ENCODE measurements at regions of chr11 and their contacts with region 1.

Region 1: DNA sequence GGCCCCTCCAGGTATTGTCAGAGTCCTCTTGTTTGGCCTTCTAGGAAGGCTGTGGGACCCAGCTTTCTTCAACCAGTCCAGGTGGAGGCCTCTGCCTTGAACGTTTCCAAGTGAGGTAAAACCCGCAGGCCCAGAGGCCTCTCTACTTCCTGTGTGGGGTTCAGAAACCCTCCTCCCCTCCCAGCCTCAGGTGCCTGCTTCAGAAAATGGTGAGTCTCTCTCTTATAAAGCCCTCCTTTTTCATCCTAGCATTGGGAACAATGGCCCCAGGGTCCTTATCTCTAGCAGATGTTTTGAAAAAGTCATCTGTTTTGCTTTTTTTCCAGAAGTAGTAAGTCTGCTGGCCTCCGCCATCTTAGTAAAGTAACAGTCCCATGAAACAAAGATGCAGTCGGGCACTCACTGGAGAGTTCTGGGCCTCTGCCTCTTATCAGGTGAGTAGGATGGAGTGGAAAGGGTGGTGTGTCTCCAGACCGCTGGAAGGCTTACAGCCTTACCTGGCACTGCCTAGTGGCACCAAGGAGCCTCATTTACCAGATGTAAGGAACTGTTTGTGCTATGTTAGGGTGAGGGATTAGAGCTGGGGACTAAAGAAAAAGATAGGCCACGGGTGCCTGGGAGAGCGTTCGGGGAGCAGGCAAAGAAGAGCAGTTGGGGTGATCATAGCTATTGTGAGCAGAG is at the start of gene CD3E:
- DNase-seq: peak; percentile 85
- ATAC-seq: peak; percentile 73
- H3K4me3 Mint-ChIP-seq: peak within 1 kb of the TSS; percentile 99
- H3K27ac Mint-ChIP-seq: peak within 1 kb of the TSS; percentile 99
- H3K4me1 Mint-ChIP-seq: peaks cover 73% of the 10 kb centered on the region
- H3K27me3 Mint-ChIP-seq: no peaks in the 10 kb centered on the region
- total RNA-seq, gene CD3E: 400 to 530 TPM

Region 2: GRCh38 chr11:117817368-117818040 is 487.2 kb before region 1 on chr11:
- CTCF ChIA-PET with region 1: interaction called, 3 read pairs
- POLR2A ChIA-PET with region 1: no interaction called
- intact Hi-C with region 1: loop called in 1 of 2 experiments (anchors 10 kb)
- DNase-seq: peak; percentile 95
- ATAC-seq: peak; percentile 45
- H3K4me3 Mint-ChIP-seq: peak overlapping the region; percentile 49
- H3K27ac Mint-ChIP-seq: peak overlapping the region; percentile 99
- H3K4me1 Mint-ChIP-seq: peaks cover 59% of the 10 kb centered on the region
- H3K27me3 Mint-ChIP-seq: no peaks in the 10 kb centered on the region

Region 3: DNA sequence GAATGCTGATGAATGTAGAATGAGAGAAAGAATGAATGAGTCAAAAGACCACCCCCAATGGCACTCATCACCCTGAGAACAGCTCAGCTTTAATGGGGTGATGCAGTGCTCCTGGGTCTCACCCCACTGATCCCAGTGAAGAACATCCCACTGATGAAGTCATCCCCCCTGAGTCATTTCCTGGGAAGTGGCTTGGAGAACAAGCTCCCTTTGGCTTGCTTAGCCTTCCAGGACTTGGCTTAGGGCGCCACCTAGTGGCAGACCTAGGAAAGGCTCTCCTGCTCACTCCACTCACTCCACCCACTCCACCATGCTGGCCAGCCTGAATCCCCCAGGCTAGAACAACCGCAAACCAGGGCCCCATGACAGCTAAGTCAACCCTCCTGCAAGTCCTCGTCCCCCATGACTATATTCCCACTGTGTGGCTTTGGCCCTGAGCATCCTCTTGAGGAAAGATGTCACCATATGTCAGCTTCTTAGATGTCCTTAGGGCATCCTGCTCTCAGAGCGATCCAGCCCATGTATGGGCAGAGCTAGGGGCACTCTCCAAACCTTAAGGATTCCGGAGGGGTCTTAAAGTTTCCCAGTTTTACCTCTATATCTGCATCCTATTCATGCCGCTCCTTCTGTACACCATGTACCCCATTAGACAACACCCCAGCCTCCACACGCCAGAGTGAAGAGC is 357.7 kb before region 1 on chr11:
- CTCF ChIA-PET with region 1: no interaction called
- POLR2A ChIA-PET with region 1: no interaction called
- intact Hi-C with region 1: no loop called
- DNase-seq: peak; percentile 92
- ATAC-seq: peak; percentile 59
- H3K4me3 Mint-ChIP-seq: no peak overlapping the region
- H3K27ac Mint-ChIP-seq: peak overlapping the region; percentile 68
- H3K4me1 Mint-ChIP-seq: peaks cover 79% of the 10 kb centered on the region
- H3K27me3 Mint-ChIP-seq: no peaks in the 10 kb centered on the region

Region 4: DNA sequence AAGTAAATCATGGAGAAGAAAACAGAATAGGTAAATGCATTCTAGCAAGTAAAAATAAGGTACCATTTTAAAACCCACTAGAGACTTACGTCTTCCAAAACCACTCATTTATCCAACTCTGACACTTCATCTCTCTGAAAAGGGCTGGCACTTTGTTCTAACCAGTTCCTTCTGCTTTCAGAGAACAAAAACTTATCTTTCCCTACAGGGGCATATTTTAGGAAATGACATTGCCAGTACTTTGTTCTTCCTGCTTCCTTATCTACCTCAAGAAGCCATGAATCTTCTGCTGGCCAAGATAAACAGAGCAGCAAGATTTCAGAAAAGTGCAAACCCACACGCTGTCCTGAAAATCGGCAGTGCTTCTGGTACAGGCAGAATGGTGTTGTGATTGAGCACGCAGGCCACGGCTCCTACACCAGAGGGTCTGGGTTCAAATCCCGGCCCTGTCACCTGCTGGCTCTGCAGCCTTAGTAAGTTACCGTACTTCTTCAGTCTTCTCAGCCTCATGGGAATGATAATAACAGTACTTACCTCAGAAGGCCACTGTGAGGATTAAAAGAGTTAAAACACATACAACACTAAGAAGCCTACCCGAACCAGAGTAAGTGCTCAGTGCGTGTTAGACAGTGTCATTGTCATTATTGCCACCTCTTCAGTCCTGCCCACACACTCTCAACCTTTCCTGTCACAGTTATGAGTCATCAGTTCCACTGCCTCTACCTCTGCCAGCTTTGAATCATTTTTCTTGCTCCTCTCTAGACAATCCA is 63.5 kb before region 1 on chr11:
- CTCF ChIA-PET with region 1: interaction called, 4 read pairs
- POLR2A ChIA-PET with region 1: interaction called, 4 read pairs
- intact Hi-C with region 1: loop called (anchors 2 to 5 kb)
- DNase-seq: peak; percentile 82
- ATAC-seq: peak; percentile 87
- H3K4me3 Mint-ChIP-seq: peak overlapping the region; percentile 77
- H3K27ac Mint-ChIP-seq: peak overlapping the region; percentile 94
- H3K4me1 Mint-ChIP-seq: peaks cover 88% of the 10 kb centered on the region
- H3K27me3 Mint-ChIP-seq: no peaks in the 10 kb centered on the region

Region 5: DNA sequence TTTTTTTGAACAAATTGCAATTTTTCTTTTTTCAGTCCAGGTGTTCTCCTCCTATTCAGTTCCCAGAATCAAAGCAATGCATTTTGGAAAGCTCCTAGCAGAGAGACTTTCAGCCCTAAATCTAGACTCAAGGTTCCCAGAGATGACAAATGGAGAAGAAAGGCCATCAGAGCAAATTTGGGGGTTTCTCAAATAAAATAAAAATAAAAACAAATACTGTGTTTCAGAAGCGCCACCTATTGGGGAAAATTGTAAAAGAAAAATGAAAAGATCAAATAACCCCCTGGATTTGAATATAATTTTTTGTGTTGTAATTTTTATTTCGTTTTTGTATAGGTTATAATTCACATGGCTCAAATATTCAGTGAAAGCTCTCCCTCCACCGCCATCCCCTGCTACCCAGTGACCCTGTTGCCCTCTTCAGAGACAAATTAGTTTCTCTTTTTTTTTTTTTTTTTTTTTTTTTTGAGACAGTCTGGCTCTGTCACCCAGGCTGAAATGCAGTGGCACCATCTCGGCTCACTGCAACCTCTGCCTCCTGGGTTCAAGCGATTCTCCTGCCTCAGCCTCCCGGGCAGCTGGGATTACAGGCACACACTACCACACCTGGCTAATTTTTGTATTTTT is 48.5 kb after region 1 on chr11:
- CTCF ChIA-PET with region 1: interaction called, 11 read pairs
- POLR2A ChIA-PET with region 1: interaction called, 3 read pairs
- intact Hi-C with region 1: no loop called
- DNase-seq: no peak
- ATAC-seq: no peak
- H3K4me3 Mint-ChIP-seq: no peak overlapping the region
- H3K27ac Mint-ChIP-seq: no peak overlapping the region
- H3K4me1 Mint-ChIP-seq: peaks cover 28% of the 10 kb centered on the region
- H3K27me3 Mint-ChIP-seq: no peaks in the 10 kb centered on the region

Region 6: GRCh38 chr11:118435893-118436624 is 131.4 kb after region 1 on chr11 and contains the start of gene KMT2A:
- CTCF ChIA-PET with region 1: no interaction called
- POLR2A ChIA-PET with region 1: no interaction called
- intact Hi-C with region 1: loop called (anchors 1 to 5 kb)
- DNase-seq: peak; percentile 96
- ATAC-seq: peak; percentile 41
- H3K4me3 Mint-ChIP-seq: peak within 1 kb of the TSS; percentile 94
- H3K27ac Mint-ChIP-seq: peak within 1 kb of the TSS; percentile 94
- H3K4me1 Mint-ChIP-seq: peaks cover 37% of the 10 kb centered on the region
- H3K27me3 Mint-ChIP-seq: no peaks in the 10 kb centered on the region
- total RNA-seq, gene KMT2A: 64.1 to 67.1 TPM

Region 7: DNA sequence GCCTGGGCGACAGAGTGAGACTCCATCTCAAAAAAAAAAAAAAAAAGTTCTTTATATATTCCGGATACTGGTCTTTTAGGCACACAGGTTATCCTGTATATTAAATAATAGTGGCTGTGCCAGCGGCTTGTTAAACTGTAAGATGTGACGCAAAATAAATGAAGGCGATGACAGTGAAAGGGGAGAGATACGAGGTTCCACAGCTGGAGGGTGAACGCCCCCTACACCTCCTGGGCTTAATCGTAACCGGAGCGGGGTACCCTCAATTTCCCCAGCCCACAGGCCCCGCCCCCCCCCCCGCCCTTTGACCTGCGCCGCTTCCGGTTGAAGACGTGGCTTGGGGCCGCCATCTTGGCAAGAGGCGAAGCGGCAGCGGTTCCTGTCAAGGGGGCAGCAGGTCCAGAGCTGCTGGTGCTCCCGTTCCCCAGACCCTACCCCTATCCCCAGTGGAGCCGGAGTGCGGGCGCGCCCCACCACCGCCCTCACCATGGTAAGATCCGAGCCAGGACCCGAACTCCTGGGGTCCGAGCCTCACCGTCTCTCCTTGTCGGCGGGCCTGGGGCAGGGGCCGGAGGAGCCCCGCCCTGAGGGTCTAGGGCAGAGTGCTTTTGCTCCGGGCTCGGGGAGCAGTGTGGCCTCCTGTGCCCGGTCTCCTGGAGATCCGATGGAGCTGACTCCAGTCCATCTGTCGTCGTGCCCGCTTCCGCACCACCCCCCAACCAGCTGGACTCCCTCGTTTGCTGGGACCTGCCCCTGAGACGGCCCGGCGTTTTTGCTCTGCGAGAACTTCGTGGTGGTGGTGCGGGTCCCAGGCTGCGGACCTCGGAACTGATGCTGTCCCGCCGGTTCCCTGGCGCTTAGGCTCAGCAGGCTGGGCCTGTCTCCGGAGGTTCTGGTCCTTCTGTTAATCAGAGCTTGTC is 267.6 kb after region 1 on chr11 and contains the start of gene ARCN1:
- CTCF ChIA-PET with region 1: interaction called, 3 read pairs
- POLR2A ChIA-PET with region 1: no interaction called
- intact Hi-C with region 1: loop called in 1 of 2 experiments (anchors 5 kb)
- DNase-seq: peak; percentile 88
- ATAC-seq: peak; percentile 80
- H3K4me3 Mint-ChIP-seq: peak within 1 kb of the TSS; percentile 89
- H3K27ac Mint-ChIP-seq: peak within 1 kb of the TSS; percentile 96
- H3K4me1 Mint-ChIP-seq: peaks cover 44% of the 10 kb centered on the region
- H3K27me3 Mint-ChIP-seq: no peaks in the 10 kb centered on the region
- total RNA-seq, gene ARCN1: 148 to 154 TPM